HCT116 (cell line): ENCODE measurements at regions of chr7 and their contacts with region 1.

Region 1: DNA sequence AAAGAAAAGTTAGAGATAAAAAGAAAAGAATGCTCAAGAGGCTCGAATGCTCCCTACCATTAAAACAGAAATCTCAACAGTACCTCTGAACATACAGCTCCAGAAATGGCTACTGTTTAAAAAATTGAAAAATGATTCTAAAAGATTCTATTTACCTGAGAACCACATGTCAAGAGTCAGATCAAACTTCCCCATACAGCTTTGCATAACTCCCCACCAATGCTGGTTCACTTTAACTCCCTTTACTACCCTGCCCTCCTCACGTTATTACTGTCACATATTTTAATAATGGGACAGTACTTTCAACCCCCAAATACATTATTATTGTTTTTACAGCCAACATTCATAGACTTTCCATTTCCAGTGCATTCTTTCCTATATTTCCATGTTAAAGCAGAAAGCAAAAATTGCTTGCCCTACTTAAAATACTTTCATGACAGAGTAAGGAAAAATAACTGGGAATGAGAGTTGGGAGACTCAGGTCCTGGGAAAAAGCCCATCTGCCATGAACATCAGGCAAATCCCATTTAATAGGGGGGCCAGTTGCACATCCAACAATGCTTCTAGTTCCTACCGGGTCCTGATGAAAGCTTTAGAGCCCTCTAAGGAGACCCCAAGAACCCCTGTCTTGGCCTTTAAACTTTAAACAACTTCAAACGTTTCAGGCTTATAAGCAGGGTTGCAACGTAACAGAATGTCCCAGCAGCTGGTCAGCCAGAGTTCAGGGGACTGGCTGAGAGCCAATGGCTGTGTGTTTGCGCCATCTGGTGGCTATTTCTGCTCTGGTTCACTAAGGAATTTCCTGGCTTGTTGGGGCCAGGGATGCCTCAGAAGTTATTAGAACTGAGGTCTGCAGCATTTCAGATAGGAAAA is 247.4 kb downstream of the ELMO1 start:
- DNase-seq: peak; percentile 61
- ATAC-seq: peak; percentile 83
- H3K4me3 ChIP-seq: no peak overlapping the region
- H3K27ac ChIP-seq: no peak overlapping the region
- H3K4me1 ChIP-seq: 0 out of 4 replicates have a peak, but pooled peaks cover 0 to 4% of the 10 kb centered on the region in 2 experiments
- H3K27me3 ChIP-seq: no peaks in the 10 kb centered on the region
- CTCF ChIP-seq: peak; percentile 75 to 95 (median 79)
- POLR2A ChIP-seq: no peak
- RAD21 ChIP-seq: peak; percentile 83

Region 2: GRCh38 chr7:36473454-36474282 is 727.6 kb before region 1 on chr7:
- CTCF ChIA-PET with region 1: interaction called, 43 read pairs
- POLR2A ChIA-PET with region 1: no interaction called
- RAD21 ChIA-PET with region 1: interaction called in 1 of 2 experiments, 4 read pairs
- intact Hi-C with region 1: loop called (anchors 1 kb)
- DNase-seq: peak; percentile 31
- ATAC-seq: peak; percentile 94
- H3K4me3 ChIP-seq: no peak overlapping the region
- H3K27ac ChIP-seq: no peak overlapping the region
- H3K4me1 ChIP-seq: no peaks in the 10 kb centered on the region
- H3K27me3 ChIP-seq: no peaks in the 10 kb centered on the region
- CTCF ChIP-seq: peak; percentile 67 to 84 (median 76)
- POLR2A ChIP-seq: no peak
- RAD21 ChIP-seq: peak; percentile 91

Region 3: DNA sequence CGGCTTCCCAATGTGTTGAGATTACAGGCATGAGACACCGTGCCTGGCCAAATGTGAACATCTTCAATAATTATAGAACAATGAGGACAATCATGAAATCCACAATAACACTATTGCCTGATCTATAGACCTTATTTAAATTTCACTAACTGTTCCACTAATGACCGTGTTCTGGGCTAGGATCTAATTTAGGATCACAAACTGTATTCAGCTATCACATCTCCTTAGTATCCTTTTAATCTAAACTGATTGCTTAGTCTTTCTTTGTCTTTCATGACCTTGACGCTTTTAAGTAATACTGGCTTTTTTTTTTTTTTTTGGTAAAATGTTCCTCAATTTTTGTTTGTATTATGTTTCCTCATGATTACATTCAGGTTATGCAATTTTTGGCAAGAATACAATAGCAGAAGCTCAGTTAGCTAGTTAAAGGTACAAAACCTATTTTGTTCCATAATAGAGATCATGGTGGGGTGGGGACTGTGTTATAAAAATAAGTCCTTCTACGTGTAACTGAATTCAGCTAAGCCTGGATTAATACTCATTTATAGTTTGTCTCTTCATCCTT is 635.4 kb before region 1 on chr7:
- CTCF ChIA-PET with region 1: no interaction called
- POLR2A ChIA-PET with region 1: no interaction called
- RAD21 ChIA-PET with region 1: no interaction called
- intact Hi-C with region 1: no loop called
- DNase-seq: no peak
- ATAC-seq: no peak
- H3K4me3 ChIP-seq: no peak overlapping the region
- H3K27ac ChIP-seq: no peak overlapping the region
- H3K4me1 ChIP-seq: no peaks in the 10 kb centered on the region
- H3K27me3 ChIP-seq: peaks cover 12% of the 10 kb centered on the region; the same call in 1 of the 2 replicates
- CTCF ChIP-seq: no peak
- POLR2A ChIP-seq: no peak
- RAD21 ChIP-seq: no peak

Region 4: GRCh38 chr7:36659172-36659516 is 542.1 kb before region 1 on chr7:
- CTCF ChIA-PET with region 1: no interaction called
- POLR2A ChIA-PET with region 1: no interaction called
- RAD21 ChIA-PET with region 1: no interaction called
- intact Hi-C with region 1: loop called (anchors 5 kb)
- DNase-seq: no peak
- ATAC-seq: no peak
- H3K4me3 ChIP-seq: no peak overlapping the region; a peak in 1 of 4 replicates
- H3K27ac ChIP-seq: peak overlapping the region; percentile 45; the same call in 1 of the 2 replicates
- H3K4me1 ChIP-seq: peaks cover 34 to 49% of the 10 kb centered on the region in 2 experiments
- H3K27me3 ChIP-seq: no peaks in the 10 kb centered on the region
- CTCF ChIP-seq: no peak
- POLR2A ChIP-seq: no peak
- RAD21 ChIP-seq: no peak

Region 5: DNA sequence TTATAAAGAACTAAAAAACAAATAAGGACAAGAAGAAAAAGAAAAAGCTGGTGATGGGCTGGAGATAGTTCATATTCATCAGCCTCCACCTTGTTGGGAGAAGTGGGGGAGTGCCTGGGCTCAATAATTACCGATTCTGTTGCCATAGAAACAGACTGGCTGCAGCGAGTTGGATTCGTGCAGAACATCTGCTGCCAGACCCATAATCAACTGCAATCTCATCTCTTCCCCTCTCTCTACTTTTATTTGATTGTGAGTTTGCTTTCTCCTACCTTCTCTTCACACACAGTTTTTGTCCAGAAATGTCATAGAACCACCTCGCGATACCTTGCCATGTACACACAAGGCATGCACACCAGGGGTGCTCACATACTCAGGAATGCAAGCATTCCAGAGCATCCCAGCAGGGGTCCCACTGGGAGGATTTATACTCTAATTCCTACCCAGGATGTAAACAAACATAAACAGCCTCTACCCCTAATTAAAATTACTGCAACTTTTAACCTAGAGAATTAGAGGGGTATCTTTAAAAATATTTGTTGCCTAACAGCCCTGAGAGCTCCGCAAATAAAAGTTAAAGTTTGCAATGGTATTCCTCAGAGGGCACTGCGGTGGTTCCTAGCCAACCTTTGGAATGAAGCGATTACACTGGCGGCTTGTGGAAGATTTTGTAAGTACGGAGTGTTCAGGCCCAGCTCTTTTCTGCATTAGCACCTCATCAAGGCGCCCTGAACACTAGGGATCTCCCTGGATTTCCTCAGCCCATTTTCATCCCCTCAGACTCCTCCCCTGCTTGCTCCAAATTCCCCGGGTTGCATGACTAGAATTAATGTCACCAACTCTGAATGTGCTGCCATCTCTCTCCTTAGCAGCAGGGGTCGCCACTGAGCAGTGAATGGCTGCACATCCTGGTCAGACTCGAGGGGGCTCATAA is 214.5 kb before region 1 on chr7:
- CTCF ChIA-PET with region 1: interaction called, 4 read pairs
- POLR2A ChIA-PET with region 1: no interaction called
- RAD21 ChIA-PET with region 1: no interaction called
- intact Hi-C with region 1: loop called (anchors 5 kb)
- DNase-seq: peak; percentile 34
- ATAC-seq: peak; percentile 94
- H3K4me3 ChIP-seq: no peak overlapping the region
- H3K27ac ChIP-seq: no peak overlapping the region
- H3K4me1 ChIP-seq: peaks cover 4 to 7% of the 10 kb centered on the region in 2 experiments; a peak in 3 of 4 replicates
- H3K27me3 ChIP-seq: no peaks in the 10 kb centered on the region
- CTCF ChIP-seq: peak; percentile 68 to 95 (median 89)
- POLR2A ChIP-seq: no peak
- RAD21 ChIP-seq: peak; percentile 79

Region 6: DNA sequence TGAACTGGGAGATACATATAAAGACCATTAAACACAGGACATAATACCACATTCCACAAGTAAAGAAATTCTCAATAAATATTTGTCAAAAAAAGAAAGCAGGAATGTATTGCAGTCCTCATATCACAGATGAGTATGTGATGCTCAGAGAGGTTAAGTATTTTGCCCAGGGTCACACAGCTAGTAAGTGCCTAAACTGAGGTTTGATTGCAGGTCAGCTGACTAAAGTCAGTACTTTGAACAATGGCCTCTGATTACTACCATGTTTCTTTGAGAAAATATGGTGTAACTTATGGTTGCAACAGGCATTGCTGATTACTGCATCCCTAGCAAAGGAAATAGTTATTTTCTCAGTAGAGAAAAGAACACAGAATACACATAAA is 19.7 kb before region 1 on chr7:
- CTCF ChIA-PET with region 1: interaction called, 16 read pairs
- POLR2A ChIA-PET with region 1: no interaction called
- RAD21 ChIA-PET with region 1: interaction called, 3 to 8 read pairs
- intact Hi-C with region 1: no loop called
- DNase-seq: no peak
- ATAC-seq: no peak
- H3K4me3 ChIP-seq: no peak overlapping the region
- H3K27ac ChIP-seq: no peak overlapping the region
- H3K4me1 ChIP-seq: peaks cover 0 to 3% of the 10 kb centered on the region in 2 experiments; a peak in 2 of 4 replicates
- H3K27me3 ChIP-seq: no peaks in the 10 kb centered on the region
- CTCF ChIP-seq: no peak
- POLR2A ChIP-seq: no peak
- RAD21 ChIP-seq: no peak